ENCODE measurements at regions of chr4 and their contacts with region 1.

Region 1: DNA sequence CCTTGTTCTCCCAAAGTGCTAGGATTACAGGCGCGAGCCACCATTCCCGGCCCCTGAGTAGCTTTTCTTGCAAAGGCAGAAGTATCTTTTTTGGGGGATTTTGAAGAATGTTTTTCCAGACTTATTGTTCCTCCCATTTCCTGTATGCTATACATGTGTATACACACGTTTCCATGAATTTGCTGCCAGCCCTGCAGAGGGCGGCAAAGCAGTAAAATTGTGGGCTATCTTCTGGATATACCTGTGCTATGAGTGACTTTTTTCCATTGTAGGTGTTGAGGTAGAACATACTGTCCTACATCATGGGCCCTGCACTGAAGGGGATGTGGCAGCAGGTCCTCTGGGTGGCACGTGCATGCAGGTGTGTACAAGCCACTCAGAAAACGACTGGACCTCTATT is 16.9 kb upstream of the MED28 start:
- DNase-seq: no peak
- H3K4me3 ChIP-seq: no peak overlapping the region
- H3K27ac ChIP-seq: no peak overlapping the region
- H3K4me1 ChIP-seq: no peaks in the 10 kb centered on the region
- H3K27me3 ChIP-seq: no peaks in the 10 kb centered on the region
- CTCF ChIP-seq: no peak

Region 2: DNA sequence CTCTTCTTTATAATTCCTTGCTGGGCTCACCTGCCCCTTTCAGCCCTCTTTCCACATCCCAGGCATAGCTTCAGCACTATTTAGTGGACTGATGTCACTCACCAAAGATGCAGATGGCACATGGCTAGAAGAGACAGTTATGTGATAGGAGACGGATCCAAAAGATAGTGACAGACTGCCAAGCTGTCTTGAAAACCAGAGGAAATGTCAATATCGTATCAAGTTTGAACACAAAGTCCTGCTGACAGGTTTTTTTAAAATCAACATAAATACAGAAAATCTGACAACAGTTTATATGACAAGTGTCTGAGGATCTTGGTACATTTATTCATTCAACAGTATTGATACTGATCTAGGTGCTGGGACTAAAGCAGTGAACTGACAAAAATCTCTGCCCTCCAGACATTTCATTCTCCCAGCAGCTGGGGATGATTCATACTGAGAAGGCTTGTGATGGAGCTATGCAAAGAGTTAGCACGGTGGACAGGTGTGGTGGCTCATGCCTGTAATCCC is 68.0 kb before region 1 on chr4:
- intact Hi-C with region 1: loop called (anchors 2 kb)
- DNase-seq: no peak
- H3K4me3 ChIP-seq: no peak overlapping the region
- H3K27ac ChIP-seq: no peak overlapping the region
- H3K4me1 ChIP-seq: no peaks in the 10 kb centered on the region
- H3K27me3 ChIP-seq: peaks cover 0 to 6% of the 10 kb centered on the region in 2 donors
- CTCF ChIP-seq: no peak